ENCODE measurements at regions of chr9 and their contacts with region 1.

Region 1: GRCh38 chr9:133375724-133376654 is at the starts of genes STKLD1 and SURF4:
- DNase-seq: peak; percentile 95 to 96
- H3K4me3 ChIP-seq: peak within 1 kb of the TSS; percentile 56 to 97 (median 79)
- H3K27ac ChIP-seq: peak within 1 kb of the TSS; percentile 81 to 93 (median 92)
- H3K4me1 ChIP-seq: peaks cover 34 to 42% of the 10 kb centered on the region in 2 donors
- H3K27me3 ChIP-seq: no peaks in the 10 kb centered on the region
- CTCF ChIP-seq: peak in 1 of 6 experiments; percentile 36
- POLR2A ChIP-seq: peak in 1 of 2 donors; percentile 92
- total RNA-seq, gene STKLD1: 1.6 to 2.2 TPM in 2 of 4 donors, not detected in the others
- total RNA-seq, gene SURF4: 165 to 253 (median 226) TPM

Region 2: DNA sequence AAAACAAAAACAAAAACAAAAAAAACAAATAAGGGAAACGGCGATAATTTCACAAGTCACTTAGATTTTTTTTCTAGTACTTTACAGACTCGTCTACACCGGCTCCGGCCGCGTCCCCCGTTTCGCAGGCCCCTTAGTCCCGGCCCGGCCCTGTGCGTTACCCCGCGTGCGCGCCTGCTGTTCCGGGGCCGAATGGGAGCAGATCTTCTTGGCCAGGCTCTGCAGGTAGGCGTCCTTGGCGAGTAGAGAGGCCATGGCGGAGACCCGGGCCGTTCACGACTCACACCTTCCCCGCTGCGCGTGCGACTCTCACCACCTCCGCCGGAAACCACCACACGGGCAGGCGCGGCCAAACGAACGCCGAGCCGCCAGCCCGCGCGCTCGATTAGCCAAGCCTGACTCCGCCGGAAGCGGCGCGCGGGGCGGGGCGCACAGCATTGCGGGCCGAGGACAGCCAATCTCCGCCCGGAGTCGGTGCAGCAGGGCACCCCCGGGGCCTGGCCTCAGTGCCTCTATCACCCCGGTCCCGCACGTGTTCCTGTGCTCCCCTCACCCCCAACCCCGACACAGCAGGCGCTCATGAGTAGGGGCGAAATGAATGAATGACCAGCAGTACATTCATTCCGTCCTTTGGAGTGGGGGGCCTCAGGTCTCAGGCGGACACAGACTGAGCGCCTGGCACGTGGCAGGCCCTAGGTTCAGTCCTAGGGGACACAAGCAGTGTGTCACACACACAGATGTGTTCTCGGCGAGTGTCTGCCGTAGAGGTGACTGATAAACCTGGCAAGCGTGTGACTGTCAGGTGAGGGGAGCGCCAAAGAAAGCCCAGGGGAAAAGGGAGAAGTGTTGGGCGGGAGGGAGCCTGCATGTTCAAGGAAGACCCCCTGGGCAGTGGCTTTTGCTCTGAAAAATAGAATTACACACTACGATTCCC is 39.8 kb before region 1 on chr9 and contains the start of gene SURF6:
- intact Hi-C with region 1: loop called (anchors 5 kb)
- DNase-seq: peak; percentile 88 to 92
- H3K4me3 ChIP-seq: peak within 1 kb of the TSS; percentile 81 to 91 (median 90)
- H3K27ac ChIP-seq: peak within 1 kb of the TSS in 2 of 3 donors; percentile 50 to 71
- H3K4me1 ChIP-seq: peaks cover 16 to 21% of the 10 kb centered on the region in 2 donors
- H3K27me3 ChIP-seq: no peaks in the 10 kb centered on the region
- CTCF ChIP-seq: peak in 1 of 6 experiments; percentile 31
- POLR2A ChIP-seq: peak in 1 of 2 donors; percentile 71
- total RNA-seq, gene SURF6: 18.4 to 34.9 (median 22.0) TPM

Measured in thyroid gland (tissue), 4 donors.